GM10248 (cell line): ENCODE measurements at regions of chr2 and their contacts with region 1.

Region 1: GRCh38 chr2:38750891-38751595 is at the start of gene SRSF7:
- DNase-seq: peak; percentile 96
- CTCF ChIP-seq: no peak

Region 2: DNA sequence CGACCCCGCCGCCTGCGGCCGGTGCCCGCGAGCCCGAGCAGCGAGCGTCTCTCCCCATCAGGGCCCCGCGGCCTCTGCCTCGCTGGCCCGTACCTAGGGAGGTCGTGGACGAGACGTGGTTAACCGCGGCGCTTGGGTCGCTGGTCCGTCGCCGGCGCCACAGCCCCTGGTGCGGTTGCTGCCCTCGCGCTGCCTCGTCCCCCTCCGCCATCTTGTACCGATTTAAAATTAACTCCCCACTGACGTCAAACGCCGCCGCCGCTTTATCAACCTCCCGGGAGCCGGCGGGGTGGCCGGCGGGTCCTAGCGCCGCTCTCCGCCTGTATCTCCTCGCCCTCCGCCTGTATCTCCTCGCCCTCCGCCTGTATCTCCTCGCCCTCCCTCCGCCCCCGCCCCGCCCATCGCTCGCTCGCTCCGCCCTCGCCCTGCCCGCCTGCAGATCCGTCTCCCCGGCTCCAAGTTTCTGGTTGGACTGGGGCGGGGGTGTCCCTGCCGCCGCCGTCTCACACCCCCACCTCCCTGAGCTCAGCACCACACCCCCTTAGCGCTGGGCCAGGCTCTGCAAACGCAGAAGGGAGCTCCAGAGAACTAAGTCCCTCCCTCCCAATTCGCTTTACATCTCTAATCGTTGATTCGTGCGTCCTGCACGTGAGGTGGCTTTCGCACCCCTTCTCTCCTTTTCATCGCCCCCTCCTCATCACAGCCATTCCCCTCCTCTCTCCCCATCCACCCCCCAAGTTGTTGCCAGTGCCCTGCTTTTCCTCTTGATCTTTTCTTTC is 373.8 kb before region 1 on chr2 and contains the start of gene ATL2:
- CTCF ChIA-PET with region 1: interaction called, 4 read pairs
- POLR2A ChIA-PET with region 1: interaction called, 13 read pairs
- DNase-seq: peak; percentile 92
- CTCF ChIP-seq: no peak

Region 3: GRCh38 chr2:38417745-38418689 is 333.0 kb before region 1 on chr2:
- CTCF ChIA-PET with region 1: no interaction called
- POLR2A ChIA-PET with region 1: no interaction called
- DNase-seq: no peak
- CTCF ChIP-seq: no peak

Region 4: GRCh38 chr2:38581193-38582147 is 169.6 kb before region 1 on chr2:
- CTCF ChIA-PET with region 1: interaction called, 6 read pairs
- POLR2A ChIA-PET with region 1: interaction called, 11 read pairs
- DNase-seq: peak; percentile 26
- CTCF ChIP-seq: peak; percentile 60

Region 5: DNA sequence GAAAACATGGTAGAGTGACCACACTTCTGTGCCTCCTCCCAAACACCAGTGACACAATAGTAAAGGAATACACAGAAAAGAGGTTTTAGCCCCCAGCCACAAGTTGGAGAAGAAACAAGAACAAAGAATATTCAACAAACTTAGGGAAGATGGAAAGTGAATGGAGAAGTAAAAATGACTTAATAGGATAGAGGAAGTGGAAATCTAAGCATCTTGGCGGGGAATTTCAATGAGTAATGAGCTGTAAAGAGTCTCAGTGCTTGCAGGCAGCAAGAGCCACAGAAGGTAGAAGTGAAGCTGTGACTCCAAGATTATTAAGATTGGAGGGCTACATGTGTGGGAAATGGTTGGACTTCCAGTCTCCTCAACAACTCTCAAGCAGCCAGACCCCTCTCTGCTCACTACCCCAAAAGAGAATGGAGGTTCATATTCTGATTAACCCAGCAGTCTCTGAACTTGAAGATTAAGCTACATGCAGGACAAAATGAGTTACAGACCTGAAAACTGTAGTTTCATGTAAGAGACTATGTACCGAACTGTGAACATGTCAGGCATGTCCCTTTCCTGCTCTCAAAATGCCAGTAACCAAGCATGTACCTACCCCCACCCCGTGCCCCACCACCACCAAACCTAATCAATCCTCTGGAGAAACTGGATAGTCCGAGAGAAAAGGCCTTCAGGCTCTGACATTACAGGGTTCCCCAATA is 131.4 kb before region 1 on chr2:
- CTCF ChIA-PET with region 1: no interaction called
- POLR2A ChIA-PET with region 1: interaction called, 10 read pairs
- DNase-seq: peak; percentile 46
- CTCF ChIP-seq: no peak

Region 6: DNA sequence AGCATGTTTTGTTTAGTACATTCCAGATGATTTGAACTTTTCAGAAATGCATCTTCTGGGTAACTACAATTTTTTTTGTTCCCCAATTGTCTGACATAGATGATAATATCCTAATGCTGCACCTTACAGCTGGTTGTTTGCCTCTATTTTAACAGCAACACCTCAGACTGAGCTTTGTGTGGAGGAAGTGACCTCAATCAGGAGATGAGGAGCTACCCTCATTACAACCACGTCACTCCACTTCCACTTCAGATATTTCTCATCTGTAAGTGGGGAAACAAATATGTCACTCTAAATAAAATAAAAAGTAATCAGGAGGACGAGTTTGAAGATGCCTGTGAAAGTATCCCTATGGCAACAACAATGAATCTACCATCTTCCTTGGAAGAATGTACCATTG is 12.2 kb after region 1 on chr2:
- CTCF ChIA-PET with region 1: no interaction called
- POLR2A ChIA-PET with region 1: interaction called, 61 read pairs
- DNase-seq: no peak
- CTCF ChIP-seq: no peak

Region 7: DNA sequence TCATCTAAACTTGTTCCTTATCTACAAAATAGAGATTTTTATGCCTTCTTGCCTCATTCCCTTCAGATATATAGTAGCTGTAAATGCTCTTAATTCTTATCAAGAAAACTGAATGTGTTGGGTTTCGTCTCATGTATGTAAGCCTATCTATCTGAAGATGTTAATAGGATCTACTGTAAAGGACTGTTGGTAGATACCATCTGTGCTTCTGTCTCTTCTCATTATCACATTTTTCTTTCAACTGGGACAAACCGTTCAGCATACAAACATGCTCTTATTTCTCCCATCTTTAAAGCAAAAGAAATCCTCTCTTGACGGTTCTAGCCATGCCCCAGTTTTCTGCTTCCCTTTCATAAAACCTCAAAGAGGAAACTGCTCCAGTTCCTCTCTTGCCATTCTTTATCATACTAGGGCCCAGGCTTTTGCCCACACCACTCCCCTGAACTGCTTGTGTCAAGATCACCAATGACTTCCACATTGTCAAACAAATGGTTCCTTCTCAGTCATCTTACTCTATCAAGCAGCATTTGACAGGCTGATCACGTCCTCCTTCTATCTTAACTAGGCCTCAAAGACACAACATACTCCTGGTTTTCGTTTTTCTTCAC is 227.4 kb after region 1 on chr2:
- CTCF ChIA-PET with region 1: no interaction called
- POLR2A ChIA-PET with region 1: no interaction called
- DNase-seq: no peak
- CTCF ChIP-seq: no peak